Naive thymus-derived CD8-positive, alpha-beta T cell (primary cell): ENCODE measurements at regions of chr3 and their contacts with region 1.

Region 1: GRCh38 chr3:150763122-150763841 is at the start of gene SIAH2:
- DNase-seq: peak; percentile 89 to 96 (median 93)
- ATAC-seq: peak; percentile 82 to 86
- H3K4me3 Mint-ChIP-seq: peak within 1 kb of the TSS; percentile 94 to 100 (median 99)
- H3K27ac Mint-ChIP-seq: peak within 1 kb of the TSS; percentile 98 to 100 (median 100)
- H3K4me1 Mint-ChIP-seq: peaks cover 14 to 53% (median 47%) of the 10 kb centered on the region in 4 donors
- H3K27me3 Mint-ChIP-seq: no peaks in the 10 kb centered on the region
- polyA plus RNA-seq, gene SIAH2: 10.9 to 20.5 (median 20.3) TPM

Region 2: DNA sequence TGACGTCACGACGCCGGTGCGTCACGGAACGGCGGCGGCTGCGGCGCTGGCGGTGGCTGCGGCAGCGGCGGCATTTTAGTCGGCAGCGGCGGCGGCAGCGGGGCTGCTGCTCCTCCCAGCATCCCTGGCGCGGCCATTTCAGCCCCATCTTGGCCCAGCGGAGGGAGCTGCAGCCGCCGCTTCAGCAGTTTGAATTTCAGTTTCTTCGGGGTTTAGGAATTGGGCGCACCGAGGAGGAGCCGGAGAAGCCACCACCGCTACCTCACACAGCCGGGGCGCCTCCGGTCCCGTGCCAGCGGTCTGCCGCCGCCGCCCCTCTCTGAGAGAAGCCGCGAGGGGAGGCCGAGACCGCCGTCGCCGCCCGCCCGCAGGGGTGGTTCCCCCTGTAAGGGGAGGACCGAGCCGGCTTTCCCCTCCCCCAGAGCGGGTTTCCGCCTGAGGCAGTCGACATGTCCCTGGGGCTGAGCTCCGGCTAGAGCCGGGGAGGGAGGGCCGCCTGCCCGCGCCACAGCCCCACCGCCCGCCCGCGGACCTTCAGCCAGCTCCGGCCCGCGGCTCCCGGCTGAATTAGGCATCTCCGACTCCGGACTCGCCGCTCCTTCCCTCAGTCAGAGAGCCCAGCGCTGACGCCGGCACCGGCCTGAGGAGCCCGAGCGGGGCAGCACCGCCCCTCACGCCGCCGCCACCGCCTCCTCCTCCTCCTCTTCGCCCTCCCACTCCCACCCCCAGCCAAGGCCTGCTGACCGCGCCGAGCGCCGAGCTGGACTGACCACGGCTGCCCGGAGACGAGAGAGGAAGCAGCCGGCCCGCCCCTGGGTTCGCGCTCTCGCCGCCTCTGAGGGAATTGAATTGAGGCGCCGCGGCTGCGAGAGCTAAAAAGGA is 354.8 kb before region 1 on chr3 and contains the start of gene TSC22D2:
- POLR2A ChIA-PET with region 1: interaction called, 33 read pairs
- DNase-seq: peak; percentile 93 to 99 (median 97)
- ATAC-seq: peak; percentile 72 to 77
- H3K4me3 Mint-ChIP-seq: peak within 1 kb of the TSS; percentile 81 to 98 (median 92)
- H3K27ac Mint-ChIP-seq: peak within 1 kb of the TSS; percentile 91 to 99 (median 98)
- H3K4me1 Mint-ChIP-seq: peaks cover 14 to 37% (median 33%) of the 10 kb centered on the region in 4 donors
- H3K27me3 Mint-ChIP-seq: no peaks in the 10 kb centered on the region
- polyA plus RNA-seq, gene TSC22D2: 6.3 to 11.8 (median 8.0) TPM

Region 3: GRCh38 chr3:150546226-150547044 is 216.8 kb before region 1 on chr3 and contains the starts of genes EIF2A and SERP1:
- POLR2A ChIA-PET with region 1: interaction called, 41 read pairs
- DNase-seq: peak; percentile 96 to 100 (median 99)
- ATAC-seq: peak; percentile 89 to 90
- H3K4me3 Mint-ChIP-seq: peak within 1 kb of the TSS; percentile 92 to 99 (median 96)
- H3K27ac Mint-ChIP-seq: peak within 1 kb of the TSS; percentile 97 to 100 (median 98)
- H3K4me1 Mint-ChIP-seq: peaks cover 25 to 84% (median 75%) of the 10 kb centered on the region in 4 donors
- H3K27me3 Mint-ChIP-seq: no peaks in the 10 kb centered on the region
- polyA plus RNA-seq, gene EIF2A: 47.7 to 67.2 (median 50.8) TPM
- polyA plus RNA-seq, gene SERP1: 121 to 165 (median 144) TPM

Region 4: GRCh38 chr3:150603153-150603979 is 159.9 kb before region 1 on chr3 and contains the start of gene SELENOT:
- POLR2A ChIA-PET with region 1: interaction called, 34 read pairs
- DNase-seq: peak; percentile 90 to 97 (median 95)
- ATAC-seq: peak; percentile 86
- H3K4me3 Mint-ChIP-seq: peak within 1 kb of the TSS; percentile 97 to 99 (median 98)
- H3K27ac Mint-ChIP-seq: peak within 1 kb of the TSS; percentile 98 to 100 (median 99)
- H3K4me1 Mint-ChIP-seq: peaks cover 33 to 90% (median 65%) of the 10 kb centered on the region in 4 donors
- H3K27me3 Mint-ChIP-seq: peaks cover 0 to 4% (median 0%) of the 10 kb centered on the region in 5 donors
- polyA plus RNA-seq, gene SELENOT: 142 to 267 (median 173) TPM

Region 5: DNA sequence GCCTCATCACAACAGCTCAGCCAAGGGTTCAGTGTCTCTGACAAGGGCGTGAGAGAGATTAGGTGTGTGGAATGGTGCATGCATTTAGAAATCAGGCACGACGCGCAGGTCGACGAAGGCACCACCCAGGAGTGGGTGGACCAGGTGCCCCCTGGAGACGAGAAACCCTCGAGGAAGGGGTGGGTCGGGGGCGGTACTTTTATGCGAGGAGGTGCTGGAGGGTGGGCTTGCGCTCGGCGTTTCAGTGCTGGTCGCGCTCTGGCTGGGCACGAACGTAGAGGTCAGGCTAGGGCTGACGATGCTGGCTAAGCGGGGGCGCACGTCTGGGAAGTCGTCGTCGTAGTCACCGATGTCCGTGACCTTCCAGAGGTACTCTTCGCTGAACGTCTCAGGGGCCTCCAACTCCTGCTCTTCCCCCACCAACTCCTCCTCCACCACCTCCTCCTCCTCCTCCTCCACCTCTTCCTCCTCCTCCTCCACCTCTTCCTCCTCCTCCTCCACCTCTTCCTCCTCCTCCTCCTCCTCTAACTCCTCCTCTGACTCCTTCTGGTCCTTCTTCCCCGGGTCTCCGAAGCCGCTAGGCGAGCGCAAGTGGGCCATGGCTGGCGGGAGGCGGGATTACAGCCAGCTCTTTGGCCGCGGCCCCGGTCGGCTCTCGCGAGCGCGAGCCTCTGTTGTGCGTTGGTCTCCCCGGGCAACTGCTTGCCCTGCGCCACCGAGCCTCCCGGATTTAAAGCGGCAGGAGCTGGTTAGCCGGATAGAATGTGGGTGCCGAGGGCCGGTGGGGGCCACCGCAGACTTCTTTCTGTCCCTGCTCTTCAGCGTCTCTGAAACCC is 59.8 kb before region 1 on chr3 and contains the start of gene ERICH6:
- POLR2A ChIA-PET with region 1: interaction called, 55 read pairs
- DNase-seq: peak; percentile 61 to 89 (median 79)
- ATAC-seq: peak; percentile 82 to 85
- H3K4me3 Mint-ChIP-seq: peak within 1 kb of the TSS; percentile 90 to 99 (median 97)
- H3K27ac Mint-ChIP-seq: peak within 1 kb of the TSS; percentile 93 to 100 (median 98)
- H3K4me1 Mint-ChIP-seq: peaks cover 14 to 32% (median 27%) of the 10 kb centered on the region in 4 donors
- H3K27me3 Mint-ChIP-seq: no peaks in the 10 kb centered on the region
- polyA plus RNA-seq, gene ERICH6: 0.14 to 0.60 (median 0.27) TPM

Region 6: GRCh38 chr3:150779402-150779858 is 16.1 kb after region 1 on chr3:
- POLR2A ChIA-PET with region 1: interaction called, 10 read pairs
- DNase-seq: no peak
- ATAC-seq: no peak
- H3K4me3 Mint-ChIP-seq: no peak overlapping the region
- H3K27ac Mint-ChIP-seq: peak overlapping the region in 1 of 10 donors; percentile 31
- H3K4me1 Mint-ChIP-seq: no peaks in the 10 kb centered on the region
- H3K27me3 Mint-ChIP-seq: peaks cover 0 to 2% (median 0%) of the 10 kb centered on the region in 5 donors

Region 7: GRCh38 chr3:150790641-150791310 is 27.5 kb after region 1 on chr3:
- POLR2A ChIA-PET with region 1: interaction called, 11 read pairs
- DNase-seq: no peak
- ATAC-seq: no peak
- H3K4me3 Mint-ChIP-seq: no peak overlapping the region
- H3K27ac Mint-ChIP-seq: no peak overlapping the region
- H3K4me1 Mint-ChIP-seq: peaks cover 0 to 6% (median 3%) of the 10 kb centered on the region in 4 donors
- H3K27me3 Mint-ChIP-seq: peaks cover 0 to 8% (median 6%) of the 10 kb centered on the region in 5 donors

Region 8: DNA sequence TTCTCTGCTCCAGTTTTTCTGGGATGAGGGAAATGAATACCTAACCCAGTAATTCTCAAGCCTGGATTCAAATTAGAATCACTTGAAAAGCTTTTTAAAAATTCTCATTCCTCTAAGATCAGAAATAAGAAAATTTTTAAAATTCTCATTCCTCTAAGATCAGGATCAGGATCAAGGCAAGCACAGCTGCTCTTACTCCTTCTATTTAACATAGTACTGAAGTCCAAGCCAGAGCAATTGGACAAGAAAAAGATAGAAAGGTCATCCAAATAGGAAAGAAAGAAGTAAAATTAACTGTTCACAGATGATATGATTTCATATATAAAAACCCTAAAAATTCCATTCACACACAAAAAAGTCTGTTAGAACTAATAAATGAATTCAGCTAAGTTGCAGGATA is 233.4 kb after region 1 on chr3:
- POLR2A ChIA-PET with region 1: no interaction called
- DNase-seq: no peak
- ATAC-seq: no peak
- H3K4me3 Mint-ChIP-seq: no peak overlapping the region
- H3K27ac Mint-ChIP-seq: no peak overlapping the region
- H3K4me1 Mint-ChIP-seq: no peaks in the 10 kb centered on the region
- H3K27me3 Mint-ChIP-seq: peaks cover 3 to 18% (median 8%) of the 10 kb centered on the region in 5 donors